GM12878 (cell line): ENCODE measurements at regions of chr4 and their contacts with region 1.

Region 1: DNA sequence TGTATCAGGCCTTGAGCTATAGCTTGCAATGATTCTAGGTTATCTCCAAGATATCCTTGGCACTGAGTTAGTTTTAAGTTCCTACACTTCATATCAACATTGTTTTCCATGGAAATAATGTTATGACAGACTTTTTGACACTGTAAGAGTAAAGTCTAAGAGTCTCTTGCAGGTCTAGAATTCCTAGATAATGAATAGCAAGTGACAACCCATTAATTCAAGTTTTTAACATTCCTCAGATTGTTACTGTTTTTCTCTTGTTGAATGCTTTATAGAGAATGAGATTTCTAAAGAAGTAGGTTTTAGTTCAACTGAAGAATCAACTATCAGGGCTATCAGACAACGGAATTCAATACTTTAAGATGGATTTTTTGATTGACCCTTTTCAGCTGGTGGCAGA is 276.1 kb downstream of the PPP3CA start:
- DNase-seq: no peak
- ATAC-seq: no peak
- H3K4me3 ChIP-seq: no peak overlapping the region
- H3K27ac ChIP-seq: no peak overlapping the region
- H3K4me1 ChIP-seq: no peaks in the 10 kb centered on the region
- H3K27me3 ChIP-seq: no peaks in the 10 kb centered on the region
- CTCF ChIP-seq: no peak
- EP300 ChIP-seq: no peak
- POLR2A ChIP-seq: no peak
- RAD21 ChIP-seq: no peak

Region 2: GRCh38 chr4:101050837-101051205 is 20.4 kb before region 1 on chr4:
- CTCF ChIA-PET with region 1: interaction called, 3 read pairs
- POLR2A ChIA-PET with region 1: interaction called, 3 read pairs
- RAD21 ChIA-PET with region 1: no interaction called
- SMC1A ChIA-PET with region 1: interaction called, 12 read pairs
- in situ Hi-C with region 1: no loop called
- intact Hi-C with region 1: no loop called
- DNase-seq: no peak
- ATAC-seq: no peak
- H3K4me3 ChIP-seq: no peak overlapping the region
- H3K27ac ChIP-seq: no peak overlapping the region
- H3K4me1 ChIP-seq: no peaks in the 10 kb centered on the region
- H3K27me3 ChIP-seq: no peaks in the 10 kb centered on the region
- CTCF ChIP-seq: no peak
- EP300 ChIP-seq: no peak
- POLR2A ChIP-seq: no peak
- RAD21 ChIP-seq: no peak